A673 (cell line): ENCODE measurements at regions of chr10 and their contacts with region 1.

Region 1: DNA sequence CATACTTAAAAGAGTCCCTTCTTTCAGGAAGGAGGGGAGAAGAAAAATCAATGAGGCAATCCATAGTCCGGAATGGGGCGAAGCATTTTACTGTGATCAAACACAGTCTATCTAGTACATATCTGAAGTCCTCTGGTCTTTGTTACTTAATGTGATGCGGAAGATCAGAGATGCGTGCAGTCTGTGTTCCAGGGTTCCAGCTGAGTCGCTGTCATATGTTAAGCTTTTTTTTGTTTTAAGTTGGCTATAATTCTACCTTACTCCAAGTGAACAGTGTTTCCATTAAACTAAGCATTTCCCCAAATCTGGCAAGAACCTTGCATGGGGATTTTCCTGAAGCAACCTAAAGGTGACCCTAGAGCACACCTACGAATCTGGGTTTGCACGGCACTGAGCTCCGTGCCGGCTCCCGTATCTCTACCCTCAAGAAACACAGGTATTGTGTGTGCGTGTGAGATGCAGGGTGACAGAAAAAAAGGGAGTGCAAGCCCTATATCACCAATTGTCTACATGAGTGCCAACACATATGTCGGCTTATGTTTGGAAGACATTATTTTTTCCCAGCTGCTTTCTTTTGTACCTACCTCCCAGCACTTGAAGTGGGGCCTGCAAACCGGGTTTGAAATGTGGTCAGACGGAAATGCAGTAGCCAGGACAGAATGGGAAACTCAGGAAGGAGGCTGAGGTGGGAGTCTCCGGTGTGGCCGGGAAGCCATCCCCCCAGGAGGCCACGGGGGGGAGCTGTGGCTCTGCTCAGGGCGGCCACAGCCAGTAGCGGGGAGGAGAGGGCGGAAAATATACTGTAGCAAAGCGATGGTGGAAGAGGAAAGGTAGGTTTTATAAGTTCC is 435.8 kb upstream of the MGMT start:
- DNase-seq: peak; percentile 91
- H3K4me3 ChIP-seq: peak overlapping the region; percentile 40
- H3K27ac ChIP-seq: peak overlapping the region; percentile 92
- H3K4me1 ChIP-seq: peaks cover 86% of the 10 kb centered on the region
- H3K27me3 ChIP-seq: no peaks in the 10 kb centered on the region
- CTCF ChIP-seq: peak; percentile 98

Region 2: DNA sequence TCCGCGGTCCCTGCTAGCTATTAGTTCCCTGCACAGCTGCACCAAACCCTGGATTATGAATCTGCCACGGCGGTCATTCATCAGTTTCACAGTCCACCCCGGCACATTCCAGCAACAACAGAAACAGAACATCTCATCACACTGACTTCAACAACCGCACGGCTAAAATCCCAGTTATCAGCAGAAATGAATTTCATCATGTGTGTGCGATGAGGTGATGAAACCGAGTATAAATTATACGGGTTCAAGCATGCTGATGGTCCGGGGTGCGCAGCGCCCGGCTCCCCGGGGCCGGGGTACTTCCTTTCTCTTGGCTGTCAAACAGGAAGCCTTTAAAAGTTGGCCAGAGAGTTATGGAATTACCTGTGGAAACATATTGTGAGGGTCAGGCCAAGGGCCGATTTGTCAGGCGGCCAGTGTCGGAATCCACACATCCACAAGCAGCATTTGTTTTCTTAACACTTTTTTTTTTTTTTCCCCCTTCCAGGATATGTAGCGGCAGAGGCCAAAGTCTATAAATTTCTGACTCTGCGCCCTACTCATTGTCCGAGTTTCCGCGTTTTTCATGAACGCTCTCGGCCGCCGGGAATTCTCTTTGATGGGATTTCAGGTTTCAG is 15.0 kb after region 1 on chr10:
- CTCF ChIA-PET with region 1: no interaction called
- POLR2A ChIA-PET with region 1: no interaction called
- intact Hi-C with region 1: no loop called
- DNase-seq: no peak
- H3K4me3 ChIP-seq: no peak overlapping the region
- H3K27ac ChIP-seq: no peak overlapping the region
- H3K4me1 ChIP-seq: peaks cover 23% of the 10 kb centered on the region
- H3K27me3 ChIP-seq: no peaks in the 10 kb centered on the region
- CTCF ChIP-seq: no peak

Region 3: DNA sequence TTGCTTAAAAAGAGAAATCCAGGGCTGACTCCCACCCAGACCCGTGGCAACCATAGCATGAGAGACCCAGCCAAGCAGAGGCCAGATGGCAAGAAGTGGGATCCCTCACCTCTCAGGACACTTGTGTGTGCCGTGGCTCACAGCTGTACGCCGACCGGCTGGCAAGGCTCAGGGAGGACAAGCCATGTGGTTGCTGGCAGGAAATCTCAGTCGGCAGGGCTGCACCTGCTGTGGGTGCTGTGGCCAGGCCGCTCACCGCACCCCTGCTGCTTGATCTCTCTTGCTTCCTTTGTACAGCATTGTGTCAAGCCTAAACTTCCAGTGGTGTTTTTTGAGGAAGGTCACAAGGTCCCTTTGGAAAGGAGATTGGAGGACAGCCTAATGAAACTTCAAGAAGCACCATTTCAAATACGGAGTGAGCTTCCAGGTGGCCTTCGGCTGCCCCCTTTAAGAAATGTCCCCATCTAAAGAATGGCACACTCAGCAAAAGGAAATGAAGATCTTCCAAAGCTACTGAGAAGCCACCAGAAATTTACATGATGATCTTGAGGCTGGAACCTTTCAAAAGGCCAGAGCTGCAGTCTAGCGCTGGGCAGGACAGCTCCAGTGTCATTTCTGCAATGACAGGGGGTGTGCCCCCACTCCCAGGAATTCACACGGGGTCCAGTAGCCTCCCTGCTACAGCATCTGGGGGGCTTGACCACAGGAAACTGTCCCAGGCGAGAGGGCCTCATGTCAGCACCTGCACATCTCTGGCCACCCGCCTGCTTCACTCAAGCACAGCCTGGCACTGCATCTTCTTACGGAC is 26.8 kb after region 1 on chr10:
- CTCF ChIA-PET with region 1: no interaction called
- POLR2A ChIA-PET with region 1: interaction called, 22 read pairs
- intact Hi-C with region 1: no loop called
- DNase-seq: no peak
- H3K4me3 ChIP-seq: no peak overlapping the region
- H3K27ac ChIP-seq: no peak overlapping the region
- H3K4me1 ChIP-seq: no peaks in the 10 kb centered on the region
- H3K27me3 ChIP-seq: no peaks in the 10 kb centered on the region
- CTCF ChIP-seq: no peak

Region 4: GRCh38 chr10:129161150-129161549 is 129.9 kb after region 1 on chr10:
- CTCF ChIA-PET with region 1: no interaction called
- POLR2A ChIA-PET with region 1: no interaction called
- intact Hi-C with region 1: loop called (anchors 2 kb)
- DNase-seq: peak; percentile 94
- H3K4me3 ChIP-seq: no peak overlapping the region
- H3K27ac ChIP-seq: peak overlapping the region; percentile 1
- H3K4me1 ChIP-seq: peaks cover 19% of the 10 kb centered on the region
- H3K27me3 ChIP-seq: no peaks in the 10 kb centered on the region
- CTCF ChIP-seq: no peak

Region 5: DNA sequence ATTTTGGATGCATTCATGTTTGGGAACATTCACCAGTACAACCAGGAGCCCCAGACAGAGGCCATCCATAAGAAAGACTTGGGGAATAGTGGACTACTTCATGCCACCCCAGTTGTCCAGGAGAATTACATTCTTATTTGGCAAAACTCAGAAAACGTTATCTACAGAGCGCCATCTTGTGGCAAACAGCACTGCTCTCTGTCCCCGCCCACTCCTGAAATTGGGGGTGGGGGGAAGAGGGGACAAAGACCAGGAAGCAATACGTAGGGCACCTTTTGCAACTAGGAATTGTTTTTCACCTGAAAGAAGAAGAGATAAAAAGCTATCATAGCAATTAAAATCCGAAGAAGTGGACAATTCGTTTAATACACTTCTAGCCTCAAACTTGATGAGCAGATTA is 301.3 kb after region 1 on chr10:
- CTCF ChIA-PET with region 1: interaction called, 4 read pairs
- POLR2A ChIA-PET with region 1: no interaction called
- intact Hi-C with region 1: loop called (anchors 1 kb)
- DNase-seq: peak; percentile 88
- H3K4me3 ChIP-seq: no peak overlapping the region
- H3K27ac ChIP-seq: peak overlapping the region; percentile 58
- H3K4me1 ChIP-seq: peaks cover 64% of the 10 kb centered on the region
- H3K27me3 ChIP-seq: no peaks in the 10 kb centered on the region
- CTCF ChIP-seq: peak; percentile 96

Region 6: GRCh38 chr10:129466703-129467358 is 435.6 kb after region 1 on chr10 and contains the start of gene MGMT:
- CTCF ChIA-PET with region 1: no interaction called
- POLR2A ChIA-PET with region 1: no interaction called
- intact Hi-C with region 1: loop called (anchors 10 kb)
- DNase-seq: peak; percentile 94
- H3K4me3 ChIP-seq: peak within 1 kb of the TSS; percentile 80
- H3K27ac ChIP-seq: peak within 1 kb of the TSS; percentile 81
- H3K4me1 ChIP-seq: peaks cover 11% of the 10 kb centered on the region
- H3K27me3 ChIP-seq: no peaks in the 10 kb centered on the region
- CTCF ChIP-seq: no peak
- total RNA-seq, gene MGMT: 19.5 and 28.0 TPM in 2 replicates

Region 7: DNA sequence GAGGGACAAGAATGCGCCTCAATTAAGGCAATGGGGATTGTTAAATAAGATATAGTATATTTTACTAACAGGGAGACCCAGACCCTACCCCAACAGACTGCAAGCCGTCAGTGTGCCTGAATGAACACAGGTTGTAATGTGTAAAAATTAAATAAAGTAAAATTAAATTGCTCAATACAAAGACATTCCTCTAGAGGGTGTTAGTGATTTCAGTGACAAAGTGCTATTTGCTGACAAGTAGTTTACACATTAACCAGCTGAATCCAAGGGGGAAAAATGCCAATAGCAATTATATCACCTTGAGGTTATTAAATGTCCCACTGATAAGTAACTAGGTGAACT is 822.3 kb after region 1 on chr10:
- CTCF ChIA-PET with region 1: no interaction called
- POLR2A ChIA-PET with region 1: no interaction called
- intact Hi-C with region 1: loop called (anchors 10 kb)
- DNase-seq: no peak
- H3K4me3 ChIP-seq: peak overlapping the region; percentile 12
- H3K27ac ChIP-seq: peak overlapping the region; percentile 54
- H3K4me1 ChIP-seq: peaks cover 33% of the 10 kb centered on the region
- H3K27me3 ChIP-seq: no peaks in the 10 kb centered on the region
- CTCF ChIP-seq: peak; percentile 63

Region 8: GRCh38 chr10:129971381-129972144 is 940.3 kb after region 1 on chr10:
- CTCF ChIA-PET with region 1: no interaction called
- POLR2A ChIA-PET with region 1: no interaction called
- intact Hi-C with region 1: loop called (anchors 1 kb)
- DNase-seq: peak; percentile 90
- H3K4me3 ChIP-seq: peak overlapping the region; percentile 53
- H3K27ac ChIP-seq: no peak overlapping the region
- H3K4me1 ChIP-seq: peaks cover 19% of the 10 kb centered on the region
- H3K27me3 ChIP-seq: peaks cover 18% of the 10 kb centered on the region
- CTCF ChIP-seq: peak; percentile 43; the same call in 1 of the 2 replicates